Endothelial cell of umbilical vein (primary cell): ENCODE measurements at regions of chr6 and their contacts with region 1.

Region 1: GRCh38 chr6:30814136-30815040 is 69.9 kb upstream of the DDR1 start:
- DNase-seq: peak; percentile 92
- H3K4me3 ChIP-seq: no peak overlapping the region
- H3K27ac ChIP-seq: peak overlapping the region; percentile 93
- H3K4me1 ChIP-seq: peaks cover 37% of the 10 kb centered on the region
- H3K27me3 ChIP-seq: no peaks in the 10 kb centered on the region
- CTCF ChIP-seq: no peak
- POLR2A ChIP-seq: no peak

Region 2: DNA sequence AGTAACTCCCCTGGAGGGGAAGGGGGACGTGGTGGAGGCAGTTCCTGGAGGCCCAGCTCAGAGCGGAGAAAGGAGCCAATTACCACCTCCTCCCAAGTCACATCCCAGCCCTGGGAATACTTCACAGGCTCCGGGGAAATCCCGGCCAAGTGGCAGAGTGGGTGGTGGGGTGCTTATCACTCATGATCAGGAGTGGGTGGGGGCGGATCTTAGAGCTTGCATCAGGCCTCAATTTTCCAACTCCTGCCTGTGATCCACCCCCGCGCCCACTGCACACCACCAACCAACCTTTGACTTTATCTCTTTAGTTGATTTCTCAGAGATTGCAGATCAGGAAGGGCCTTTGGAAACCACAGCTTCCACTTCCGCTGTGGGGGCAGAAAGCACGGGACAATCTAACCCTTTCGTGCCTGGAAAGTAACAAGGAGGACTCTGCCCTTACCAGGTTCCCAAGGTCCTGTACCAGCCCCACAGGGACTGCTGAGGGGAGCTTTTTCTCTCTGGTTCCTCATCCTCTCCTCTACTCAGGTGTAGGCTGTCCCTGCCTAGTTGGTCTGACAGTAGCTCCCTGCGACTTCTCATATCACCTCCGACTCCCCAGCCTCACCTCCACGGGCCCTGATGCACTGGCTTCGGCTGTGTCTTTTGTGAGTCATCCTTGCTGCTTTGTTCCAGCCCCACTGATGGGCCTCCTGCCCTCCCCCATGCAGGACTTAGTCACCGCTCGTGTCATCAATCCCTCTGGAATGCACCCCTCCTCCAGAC is 45.1 kb before region 1 on chr6:
- CTCF ChIA-PET with region 1: interaction called, 9 read pairs
- POLR2A ChIA-PET with region 1: no interaction called
- dilution Hi-C with region 1: no loop called
- intact Hi-C with region 1: loop called (anchors 1 kb)
- DNase-seq: peak; percentile 94
- H3K4me3 ChIP-seq: peak overlapping the region in 1 of 3 experiments; percentile 35
- H3K27ac ChIP-seq: peak overlapping the region; percentile 96
- H3K4me1 ChIP-seq: peaks cover 29% of the 10 kb centered on the region
- H3K27me3 ChIP-seq: no peaks in the 10 kb centered on the region
- CTCF ChIP-seq: no peak
- POLR2A ChIP-seq: peak; percentile 63

Region 3: DNA sequence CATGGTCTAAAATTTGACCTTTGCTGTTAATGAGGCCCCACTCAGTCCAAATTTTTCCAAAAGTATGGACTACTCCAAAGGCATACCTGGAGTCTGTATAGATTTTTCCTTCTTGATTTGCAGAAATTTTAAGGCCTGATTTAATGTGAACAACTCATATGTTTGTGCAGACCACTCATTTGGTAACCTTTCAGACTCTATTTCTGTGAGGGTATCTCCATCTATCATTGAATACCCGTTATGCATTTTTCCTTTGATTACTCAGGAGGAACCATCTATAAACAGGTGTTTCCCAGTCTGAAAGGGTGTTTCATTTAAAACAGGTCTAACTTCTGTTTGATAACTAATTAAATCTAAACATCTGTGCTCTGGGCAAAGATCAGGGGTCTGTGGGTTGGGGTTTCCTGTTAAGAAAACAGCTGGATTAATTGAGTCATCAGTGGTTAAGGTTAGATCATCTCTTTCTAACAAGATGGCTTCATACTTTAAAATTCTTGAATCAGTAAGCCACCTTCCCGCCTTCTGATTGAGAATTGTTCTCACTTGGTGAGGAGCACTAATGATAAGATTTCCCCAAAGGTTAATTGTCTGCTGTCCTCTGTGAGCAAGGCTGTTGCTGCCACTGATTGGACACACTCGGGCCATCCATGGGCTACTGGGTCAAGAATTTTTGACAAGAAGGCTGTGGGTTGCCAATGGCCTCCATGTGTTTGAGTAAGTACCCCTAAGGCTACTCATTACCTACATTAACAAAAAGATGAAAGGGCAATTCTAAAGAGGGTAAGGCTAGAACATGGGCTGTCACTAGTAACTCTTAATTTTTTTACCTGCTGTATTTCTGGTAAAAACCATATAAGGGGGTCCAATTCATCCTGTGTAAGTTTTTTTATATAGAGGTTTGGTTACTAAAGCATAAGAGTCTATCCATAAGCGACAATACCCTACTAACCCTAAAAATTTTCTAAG is 518.5 kb after region 1 on chr6:
- CTCF ChIA-PET with region 1: no interaction called
- POLR2A ChIA-PET with region 1: no interaction called
- dilution Hi-C with region 1: no loop called
- intact Hi-C with region 1: no loop called
- DNase-seq: no peak
- H3K4me3 ChIP-seq: no peak overlapping the region
- H3K27ac ChIP-seq: no peak overlapping the region
- H3K4me1 ChIP-seq: no peaks in the 10 kb centered on the region
- H3K27me3 ChIP-seq: peaks cover 4 to 10% of the 10 kb centered on the region in 2 experiments
- CTCF ChIP-seq: no peak
- POLR2A ChIP-seq: no peak

Region 4: DNA sequence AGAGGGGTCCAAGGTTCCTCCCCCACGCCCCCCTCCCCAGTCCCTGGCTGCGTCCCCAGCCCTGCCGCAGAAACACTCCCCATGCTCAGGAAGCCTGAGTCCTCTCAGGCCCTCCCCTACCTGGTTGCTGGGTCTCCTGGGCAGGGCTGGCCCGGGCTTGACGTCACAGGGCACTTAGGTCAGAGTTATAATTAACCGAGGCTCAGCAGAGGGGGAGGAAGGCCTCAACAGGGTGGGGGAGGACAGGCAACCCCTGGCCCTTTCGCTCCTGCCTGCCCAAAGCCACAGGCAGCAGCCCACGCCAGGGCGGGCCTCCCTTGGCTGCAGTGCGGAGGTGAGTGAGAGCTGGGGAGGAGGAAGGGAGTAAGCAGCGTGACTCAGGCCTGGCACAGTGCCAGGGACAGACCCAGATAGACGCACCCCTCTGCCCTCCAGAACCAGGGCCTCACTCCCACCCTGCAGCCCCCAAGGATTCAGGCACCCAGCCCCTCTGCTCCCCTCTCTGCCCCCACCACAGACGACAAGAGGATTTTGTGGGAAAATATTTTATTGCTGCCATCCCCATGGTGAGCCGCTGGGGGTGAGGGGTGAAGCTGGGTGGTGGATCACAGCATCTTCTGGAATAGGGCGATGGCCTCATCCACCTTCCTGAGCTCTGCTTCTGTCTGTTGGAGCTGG is 962.7 kb after region 1 on chr6 and contains the start of gene VWA7:
- CTCF ChIA-PET with region 1: no interaction called
- POLR2A ChIA-PET with region 1: no interaction called
- dilution Hi-C with region 1: no loop called
- intact Hi-C with region 1: no loop called
- DNase-seq: peak; percentile 35
- H3K4me3 ChIP-seq: no peak within 1 kb of the TSS
- H3K27ac ChIP-seq: no peak within 1 kb of the TSS
- H3K4me1 ChIP-seq: peaks cover 4% of the 10 kb centered on the region
- H3K27me3 ChIP-seq: no peaks in the 10 kb centered on the region
- CTCF ChIP-seq: no peak
- POLR2A ChIP-seq: no peak
- total RNA-seq, gene VWA7: 0.25 and 0.51 TPM in 2 replicates